ENCODE measurements at regions of chr11 and their contacts with region 1.

Region 1: GRCh38 chr11:35485656-35486322 is 39.6 kb downstream of the PAMR1 start:
- DNase-seq: peak; percentile 85
- H3K4me3 Mint-ChIP-seq: no peak overlapping the region
- H3K27ac Mint-ChIP-seq: no peak overlapping the region
- H3K4me1 Mint-ChIP-seq: no peaks in the 10 kb centered on the region
- H3K27me3 Mint-ChIP-seq: peaks cover 31% of the 10 kb centered on the region
- CTCF ChIP-seq: peak; percentile 88

Region 2: DNA sequence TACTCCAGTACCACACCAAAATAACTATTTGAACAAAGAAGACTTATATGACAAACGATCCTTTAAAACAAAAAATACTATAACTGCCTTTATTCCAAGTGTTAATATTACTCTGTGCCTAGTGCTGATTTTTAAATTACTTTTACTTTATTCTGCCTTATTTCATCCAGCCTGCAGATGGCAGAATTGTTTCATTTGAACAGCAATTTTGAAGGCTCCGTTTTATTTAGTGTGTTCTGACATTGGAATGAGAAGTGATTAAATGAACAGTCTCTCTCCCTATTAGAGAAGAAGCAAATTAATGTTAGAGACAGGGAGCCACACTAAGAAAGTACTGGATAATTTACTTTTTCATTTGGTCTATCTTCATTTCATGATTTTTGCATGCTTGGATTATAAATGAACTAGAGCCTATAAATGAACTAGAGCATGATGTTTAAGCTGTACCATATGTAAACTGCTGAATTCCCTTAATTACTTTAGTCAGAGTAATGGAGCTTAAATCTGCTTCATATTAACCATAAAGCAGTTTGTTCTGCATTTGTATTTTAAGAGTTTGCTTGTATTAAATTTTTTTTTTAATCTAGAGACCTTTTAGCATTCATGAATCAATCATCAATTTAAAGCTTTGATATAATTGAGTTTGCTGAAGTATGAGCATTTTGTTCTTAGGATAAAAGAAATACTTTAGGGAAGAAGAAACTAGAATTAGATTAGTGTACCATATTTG is 559.5 kb before region 1 on chr11:
- CTCF ChIA-PET with region 1: no interaction called
- intact Hi-C with region 1: loop called (anchors 5 kb)
- DNase-seq: peak; percentile 38
- H3K4me3 Mint-ChIP-seq: peak overlapping the region; percentile 5
- H3K27ac Mint-ChIP-seq: peak overlapping the region; percentile 38
- H3K4me1 Mint-ChIP-seq: peaks cover 49% of the 10 kb centered on the region
- H3K27me3 Mint-ChIP-seq: no peaks in the 10 kb centered on the region
- CTCF ChIP-seq: peak; percentile 54

Region 3: GRCh38 chr11:35549787-35550186 is 64.0 kb after region 1 on chr11:
- CTCF ChIA-PET with region 1: no interaction called
- intact Hi-C with region 1: no loop called
- DNase-seq: no peak
- H3K4me3 Mint-ChIP-seq: no peak overlapping the region
- H3K27ac Mint-ChIP-seq: no peak overlapping the region
- H3K4me1 Mint-ChIP-seq: no peaks in the 10 kb centered on the region
- H3K27me3 Mint-ChIP-seq: peaks cover 92% of the 10 kb centered on the region
- CTCF ChIP-seq: no peak

Region 4: GRCh38 chr11:36131721-36132397 is 646.1 kb after region 1 on chr11:
- CTCF ChIA-PET with region 1: no interaction called
- intact Hi-C with region 1: loop called (anchors 5 kb)
- DNase-seq: peak; percentile 26
- H3K4me3 Mint-ChIP-seq: no peak overlapping the region
- H3K27ac Mint-ChIP-seq: no peak overlapping the region
- H3K4me1 Mint-ChIP-seq: no peaks in the 10 kb centered on the region
- H3K27me3 Mint-ChIP-seq: no peaks in the 10 kb centered on the region
- CTCF ChIP-seq: peak; percentile 18

Region 5: DNA sequence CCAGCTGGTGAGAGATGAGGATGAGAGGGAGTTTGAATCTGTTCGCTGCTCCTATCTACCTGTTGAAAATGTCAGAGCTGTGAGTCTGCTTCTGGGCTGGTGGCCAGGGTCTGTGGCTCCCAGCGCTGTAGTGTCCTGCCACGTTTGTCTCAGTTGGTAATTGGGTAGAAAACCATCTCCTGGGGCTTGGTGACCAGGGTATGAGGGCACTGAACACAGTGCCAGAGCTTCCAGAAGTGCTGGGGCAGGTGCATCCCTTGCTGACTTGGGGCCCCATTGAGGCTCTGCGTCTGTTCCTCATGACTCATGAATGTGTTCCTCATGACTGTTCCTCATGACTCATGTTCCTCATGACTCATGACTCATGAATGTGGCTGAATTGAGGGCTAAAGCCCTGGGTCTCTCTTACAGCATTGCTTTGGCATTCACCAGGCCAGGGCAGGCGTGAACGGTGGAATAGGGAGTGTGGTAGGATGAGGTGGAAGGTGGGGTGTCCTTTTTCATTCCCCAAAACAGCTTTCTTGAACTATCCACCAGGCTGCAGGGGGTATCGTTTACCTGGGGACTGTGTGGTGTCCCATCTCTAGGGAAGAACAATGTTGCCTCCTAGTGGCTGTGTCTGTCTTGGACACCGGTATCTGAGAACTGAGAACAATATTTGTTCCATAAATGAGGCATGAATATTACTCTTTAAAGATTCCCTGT is 663.9 kb after region 1 on chr11:
- CTCF ChIA-PET with region 1: no interaction called
- intact Hi-C with region 1: loop called (anchors 10 kb)
- DNase-seq: peak; percentile 89
- H3K4me3 Mint-ChIP-seq: peak overlapping the region; percentile 35
- H3K27ac Mint-ChIP-seq: peak overlapping the region; percentile 88
- H3K4me1 Mint-ChIP-seq: peaks cover 46% of the 10 kb centered on the region
- H3K27me3 Mint-ChIP-seq: no peaks in the 10 kb centered on the region
- CTCF ChIP-seq: peak; percentile 61

Region 6: DNA sequence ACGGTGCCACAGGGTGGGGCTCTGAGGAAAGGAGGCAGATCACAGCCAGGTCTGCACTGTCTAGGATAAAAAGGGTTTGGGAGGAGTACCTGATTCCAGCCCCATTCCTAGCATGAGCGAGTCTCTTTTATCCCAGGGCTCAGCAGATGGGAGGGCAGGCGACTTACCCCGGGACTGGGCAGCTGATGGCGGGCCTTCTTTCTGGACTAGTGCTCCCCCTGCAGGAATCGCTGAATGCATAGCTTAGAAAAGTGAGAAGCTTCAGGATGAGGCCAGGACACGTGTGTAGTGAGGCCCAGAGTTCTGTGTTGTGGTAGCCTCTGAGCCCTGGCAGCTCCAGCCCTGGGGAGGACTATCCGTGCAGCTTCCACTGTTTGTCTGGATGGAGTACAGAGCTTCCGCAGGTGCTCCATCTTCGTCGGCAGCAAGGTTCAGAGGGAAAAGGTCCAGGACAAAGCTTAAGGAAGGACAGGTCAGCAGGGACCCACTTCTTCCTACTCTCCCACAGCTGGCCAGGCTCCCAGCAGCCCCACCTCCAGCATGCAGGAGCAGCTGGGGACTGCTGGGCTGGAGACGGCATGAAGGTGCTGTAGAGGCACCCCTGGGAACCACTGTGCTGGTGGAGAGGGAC is 773.1 kb after region 1 on chr11:
- CTCF ChIA-PET with region 1: interaction called, 3 read pairs
- intact Hi-C with region 1: loop called (anchors 2 kb)
- DNase-seq: peak; percentile 76
- H3K4me3 Mint-ChIP-seq: no peak overlapping the region
- H3K27ac Mint-ChIP-seq: no peak overlapping the region
- H3K4me1 Mint-ChIP-seq: peaks cover 13% of the 10 kb centered on the region
- H3K27me3 Mint-ChIP-seq: peaks cover 70% of the 10 kb centered on the region
- CTCF ChIP-seq: peak; percentile 62

Region 7: GRCh38 chr11:36265793-36266628 is 780.2 kb after region 1 on chr11:
- CTCF ChIA-PET with region 1: interaction called, 7 read pairs
- intact Hi-C with region 1: loop called (anchors 2 kb)
- DNase-seq: peak; percentile 64
- H3K4me3 Mint-ChIP-seq: no peak overlapping the region
- H3K27ac Mint-ChIP-seq: no peak overlapping the region
- H3K4me1 Mint-ChIP-seq: no peaks in the 10 kb centered on the region
- H3K27me3 Mint-ChIP-seq: peaks cover 52% of the 10 kb centered on the region
- CTCF ChIP-seq: peak; percentile 82

Measured in Calu3 (cell line).